ENCODE measurements at regions of chr3 and their contacts with region 1.

Region 1: DNA sequence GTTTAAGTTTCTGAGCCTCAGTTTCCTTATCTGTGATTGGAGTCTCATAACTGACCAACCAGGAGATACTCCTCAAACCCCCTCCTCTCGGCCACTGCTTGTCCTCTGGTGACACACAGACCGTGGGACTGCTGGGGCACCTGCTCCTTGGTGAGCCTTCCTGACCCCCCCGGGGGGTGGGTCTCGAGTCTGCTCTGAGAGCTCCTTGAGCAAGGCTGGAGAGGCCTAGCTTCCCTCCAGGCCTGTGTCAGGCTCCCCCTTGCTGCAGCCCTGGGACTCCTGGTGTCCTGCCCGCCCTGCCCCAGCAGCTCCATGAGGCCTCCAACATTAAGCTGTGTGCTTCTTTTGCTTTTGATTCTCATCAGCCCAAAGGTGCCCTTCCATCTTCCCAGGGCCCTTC is 27.7 kb downstream of the SRPRB start:
- DNase-seq: no peak
- ATAC-seq: no peak
- H3K4me3 ChIP-seq: no peak overlapping the region
- H3K27ac ChIP-seq: no peak overlapping the region
- H3K4me1 ChIP-seq: no peaks in the 10 kb centered on the region
- H3K27me3 ChIP-seq: no peaks in the 10 kb centered on the region
- CTCF ChIP-seq: no peak

Region 2: DNA sequence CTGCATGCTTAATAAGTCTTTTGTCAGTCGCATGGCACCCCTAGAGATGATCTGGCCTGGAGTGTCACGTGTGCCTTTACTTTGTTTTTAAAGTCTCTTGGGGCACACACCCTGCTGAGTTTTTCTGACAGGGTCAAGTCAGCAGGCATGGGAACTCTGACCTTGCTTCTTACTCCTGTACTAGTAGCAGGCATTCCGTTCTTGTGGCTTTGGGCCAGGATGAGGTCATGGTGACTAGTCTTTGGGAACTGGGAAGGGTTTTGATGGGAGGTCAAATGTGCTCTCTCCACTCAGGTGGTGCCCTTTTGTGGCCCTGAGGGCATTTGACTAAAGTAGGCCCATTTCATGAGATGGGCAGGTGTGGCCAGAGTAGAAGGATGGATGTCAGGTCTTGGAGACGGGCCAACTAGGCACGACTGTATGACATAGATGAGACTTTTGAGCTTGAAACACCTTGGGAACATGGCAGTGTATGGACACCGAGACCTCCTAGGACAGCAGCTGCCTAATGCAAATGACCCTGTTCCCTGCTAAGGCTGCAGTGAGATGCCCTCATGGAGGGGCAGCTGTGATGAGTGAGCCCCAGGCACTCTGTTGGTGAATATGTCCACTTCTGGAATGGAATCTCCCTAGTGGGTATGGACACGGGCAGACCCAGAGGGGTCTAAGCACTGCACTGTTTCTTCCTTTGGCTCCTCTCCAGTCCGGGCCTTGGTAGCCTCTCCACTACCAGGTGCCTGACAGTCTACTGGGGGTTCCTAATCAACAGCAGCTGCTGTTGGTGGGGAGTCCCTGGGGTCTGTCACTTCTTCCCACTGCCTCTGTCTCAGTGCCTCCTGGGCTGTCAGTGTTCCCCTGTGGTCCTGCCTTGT is 11.3 kb before region 1 on chr3:
- CTCF ChIA-PET with region 1: no interaction called
- POLR2A ChIA-PET with region 1: interaction called, 13 read pairs
- in situ Hi-C with region 1: no loop called
- intact Hi-C with region 1: no loop called
- DNase-seq: peak; percentile 91
- ATAC-seq: peak; percentile 73
- H3K4me3 ChIP-seq: no peak overlapping the region
- H3K27ac ChIP-seq: no peak overlapping the region
- H3K4me1 ChIP-seq: 0 out of 2 replicates have a peak, but pooled peaks cover 3% of the 10 kb centered on the region
- H3K27me3 ChIP-seq: no peaks in the 10 kb centered on the region
- CTCF ChIP-seq: no peak; the same call in 1 of the 2 replicates

Region 3: GRCh38 chr3:133851266-133851906 is 18.1 kb after region 1 on chr3:
- CTCF ChIA-PET with region 1: no interaction called
- POLR2A ChIA-PET with region 1: no interaction called
- in situ Hi-C with region 1: no loop called
- intact Hi-C with region 1: no loop called
- DNase-seq: no peak
- ATAC-seq: no peak
- H3K4me3 ChIP-seq: no peak overlapping the region
- H3K27ac ChIP-seq: no peak overlapping the region
- H3K4me1 ChIP-seq: no peaks in the 10 kb centered on the region
- H3K27me3 ChIP-seq: no peaks in the 10 kb centered on the region
- CTCF ChIP-seq: no peak

Region 4: GRCh38 chr3:134567605-134568004 is 734.3 kb after region 1 on chr3:
- CTCF ChIA-PET with region 1: no interaction called
- POLR2A ChIA-PET with region 1: no interaction called
- in situ Hi-C with region 1: no loop called
- intact Hi-C with region 1: no loop called
- DNase-seq: no peak
- ATAC-seq: peak; percentile 47; the same call in 1 of the 2 replicates
- H3K4me3 ChIP-seq: no peak overlapping the region
- H3K27ac ChIP-seq: no peak overlapping the region
- H3K4me1 ChIP-seq: no peaks in the 10 kb centered on the region
- H3K27me3 ChIP-seq: no peaks in the 10 kb centered on the region
- CTCF ChIP-seq: no peak

Measured in Panc1 (cell line).